Dorsolateral prefrontal cortex (tissue), 120 donors: ENCODE measurements at regions of chr19 and their contacts with region 1.

Region 1: DNA sequence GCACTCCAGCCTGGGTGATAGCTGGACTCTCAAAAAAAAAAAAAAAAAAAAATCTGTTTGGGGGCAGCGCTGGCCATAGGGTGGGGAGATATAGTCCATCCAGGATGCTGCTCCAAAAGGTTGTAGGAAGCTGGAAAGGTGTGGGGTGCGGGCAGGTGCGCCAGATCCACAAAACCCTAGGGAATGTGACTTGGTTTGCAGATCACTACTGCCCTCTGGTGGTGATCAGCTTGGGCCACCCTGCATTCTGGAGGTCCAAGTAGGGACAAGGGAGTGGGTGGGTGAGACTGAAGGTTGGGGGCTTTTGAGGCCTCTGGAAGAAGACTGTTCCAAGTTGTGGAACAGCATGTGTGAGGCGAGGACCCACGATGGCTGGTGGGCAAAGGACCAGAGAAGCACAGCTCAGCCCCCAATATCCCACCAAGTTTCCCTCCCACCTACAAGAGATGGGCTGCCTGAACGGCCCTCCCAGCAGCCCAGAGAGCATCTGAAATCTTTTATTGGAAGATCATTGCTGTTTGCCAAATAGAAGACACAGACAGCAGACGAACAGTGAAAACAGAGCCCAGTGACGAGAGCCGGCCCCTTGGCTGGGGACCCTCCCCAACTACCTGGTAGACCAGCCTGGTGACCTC is 10.4 kb upstream of the TYK2 start:
- DNase-seq: peak in 9 of 10 donors; percentile 44 to 81 (median 69)
- H3K4me3 ChIP-seq: no peak overlapping the region
- H3K27ac ChIP-seq: no peak overlapping the region
- H3K27me3 ChIP-seq: no peaks in the 10 kb centered on the region
- CTCF ChIP-seq: peak; percentile 53 to 91 (median 82)

Region 2: DNA sequence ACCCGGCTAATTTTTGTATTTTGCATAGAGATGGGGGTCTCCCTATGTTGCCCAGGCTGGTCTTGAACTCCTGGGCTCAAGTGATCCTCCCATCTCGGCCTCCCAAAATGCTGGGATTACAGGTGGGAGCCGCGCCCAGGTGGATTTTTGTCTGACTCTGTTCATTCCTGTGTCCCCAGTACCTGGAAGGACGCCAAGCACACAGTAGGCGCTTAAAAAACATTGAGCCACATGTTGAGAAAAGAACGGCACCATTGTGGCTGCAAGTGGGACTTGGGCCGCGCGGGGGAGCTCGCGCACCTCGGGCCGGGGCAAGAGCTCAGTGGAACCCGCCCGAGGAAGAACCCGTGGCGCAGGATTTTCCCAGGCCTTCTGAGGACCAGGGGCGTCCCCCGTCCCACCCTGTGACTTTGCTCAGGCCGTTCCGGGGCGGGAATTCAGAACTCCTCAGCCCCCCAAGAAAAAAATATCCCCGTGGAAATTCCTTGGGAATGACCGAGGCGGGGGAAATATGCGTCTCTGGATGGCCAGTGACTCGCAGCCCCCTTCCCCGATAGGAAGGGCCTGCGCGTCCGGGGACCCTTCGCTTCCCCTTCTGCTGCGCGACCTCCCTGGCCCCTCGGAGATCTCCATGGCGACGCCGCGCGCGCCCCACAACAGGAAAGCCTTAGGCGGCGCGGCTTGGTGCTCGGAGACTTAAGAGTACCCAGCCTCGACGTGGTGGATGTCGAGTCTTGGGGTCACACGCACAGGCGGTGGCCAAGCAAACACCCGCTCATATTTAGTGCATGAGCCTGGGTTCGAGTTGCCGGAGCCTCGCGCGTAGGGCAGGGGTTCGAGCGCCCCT is 121.2 kb before region 1 on chr19:
- intact Hi-C with region 1: loop called (anchors 1 kb)
- DNase-seq: peak; percentile 62 to 86 (median 78)
- H3K4me3 ChIP-seq: peak overlapping the region; percentile 14 to 66 (median 49)
- H3K27ac ChIP-seq: peak overlapping the region in 53 of 59 donors; percentile 8 to 90 (median 68)
- H3K27me3 ChIP-seq: peaks cover 0 to 25% (median 12%) of the 10 kb centered on the region in 45 donors
- CTCF ChIP-seq: peak; percentile 83 to 97 (median 93)